K562 (cell line): ENCODE measurements at regions of chr1 and their contacts with region 1.

Region 1: DNA sequence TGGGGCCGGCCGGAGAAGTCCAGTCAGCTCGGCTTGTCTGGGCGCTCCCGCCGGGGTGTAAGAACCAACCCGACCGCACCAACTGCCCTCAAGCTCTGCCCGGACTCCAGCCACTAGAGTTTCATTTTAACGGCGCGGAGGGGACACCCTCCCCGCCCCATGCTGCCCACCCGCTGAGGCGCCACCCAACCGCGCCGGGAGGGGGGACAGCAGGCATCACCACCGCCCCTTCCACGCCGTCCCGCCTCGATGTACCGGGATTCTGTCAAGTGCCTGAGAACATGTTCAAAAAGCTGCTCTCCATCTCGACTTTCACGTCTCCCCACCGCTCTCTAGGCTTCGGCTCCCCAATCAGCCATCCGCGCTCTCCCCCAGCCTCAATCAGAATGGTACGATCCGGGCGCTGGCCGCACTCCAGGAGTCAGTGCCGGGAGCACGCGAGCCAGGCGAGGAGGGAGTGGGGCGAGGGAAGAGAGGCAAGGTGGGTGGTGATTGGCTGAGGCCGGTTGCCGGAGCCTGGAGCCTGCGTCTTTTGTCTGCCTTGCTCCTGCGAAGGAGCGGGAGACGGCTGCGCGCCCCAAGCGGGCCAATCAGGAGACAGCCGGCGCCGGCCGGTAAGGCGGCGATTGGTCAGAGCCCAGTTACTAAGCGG is at the start of gene PIK3R3:
- DNase-seq: peak; percentile 99 to 100 (median 100)
- ATAC-seq: peak; percentile 97
- H3K4me3 ChIP-seq: peak within 1 kb of the TSS; percentile 61
- H3K27ac ChIP-seq: peak within 1 kb of the TSS; percentile 95
- H3K4me1 ChIP-seq: peaks cover 13 to 21% of the 10 kb centered on the region in 2 experiments; a peak in 4 of 5 replicates
- H3K27me3 ChIP-seq: no peaks in the 10 kb centered on the region
- CTCF ChIP-seq: no peak; a peak in 1 of 6 replicates
- EP300 ChIP-seq: no peak; the same call in none of the 2 replicates
- POLR2A ChIP-seq: peak; percentile 94
- RAD21 ChIP-seq: no peak
- polyA plus RNA-seq, gene PIK3R3: 1.4 to 2.2 TPM

Region 2: GRCh38 chr1:45979074-45979777 is 153.4 kb before region 1 on chr1:
- CTCF ChIA-PET with region 1: no interaction called
- POLR2A ChIA-PET with region 1: no interaction called
- in situ Hi-C with region 1: no loop called
- intact Hi-C with region 1: no loop called
- DNase-seq: no peak
- ATAC-seq: no peak
- H3K4me3 ChIP-seq: no peak overlapping the region
- H3K27ac ChIP-seq: no peak overlapping the region
- H3K4me1 ChIP-seq: no peaks in the 10 kb centered on the region
- H3K27me3 ChIP-seq: no peaks in the 10 kb centered on the region
- CTCF ChIP-seq: no peak
- EP300 ChIP-seq: no peak
- POLR2A ChIP-seq: no peak
- RAD21 ChIP-seq: no peak

Region 3: GRCh38 chr1:46036894-46037839 is 95.5 kb before region 1 on chr1:
- CTCF ChIA-PET with region 1: no interaction called
- POLR2A ChIA-PET with region 1: interaction called, 7 read pairs
- in situ Hi-C with region 1: no loop called
- intact Hi-C with region 1: loop called (anchors 2 kb)
- DNase-seq: peak; percentile 87 to 92 (median 88)
- ATAC-seq: peak; percentile 95
- H3K4me3 ChIP-seq: no peak overlapping the region
- H3K27ac ChIP-seq: no peak overlapping the region; the same call in 2 of the 3 replicates
- H3K4me1 ChIP-seq: peaks cover 3 to 12% of the 10 kb centered on the region in 2 experiments; a peak in 4 of 5 replicates
- H3K27me3 ChIP-seq: no peaks in the 10 kb centered on the region
- CTCF ChIP-seq: peak; percentile 97 to 99 (median 99)
- EP300 ChIP-seq: no peak
- POLR2A ChIP-seq: peak; percentile 71
- RAD21 ChIP-seq: peak; percentile 100

Region 4: DNA sequence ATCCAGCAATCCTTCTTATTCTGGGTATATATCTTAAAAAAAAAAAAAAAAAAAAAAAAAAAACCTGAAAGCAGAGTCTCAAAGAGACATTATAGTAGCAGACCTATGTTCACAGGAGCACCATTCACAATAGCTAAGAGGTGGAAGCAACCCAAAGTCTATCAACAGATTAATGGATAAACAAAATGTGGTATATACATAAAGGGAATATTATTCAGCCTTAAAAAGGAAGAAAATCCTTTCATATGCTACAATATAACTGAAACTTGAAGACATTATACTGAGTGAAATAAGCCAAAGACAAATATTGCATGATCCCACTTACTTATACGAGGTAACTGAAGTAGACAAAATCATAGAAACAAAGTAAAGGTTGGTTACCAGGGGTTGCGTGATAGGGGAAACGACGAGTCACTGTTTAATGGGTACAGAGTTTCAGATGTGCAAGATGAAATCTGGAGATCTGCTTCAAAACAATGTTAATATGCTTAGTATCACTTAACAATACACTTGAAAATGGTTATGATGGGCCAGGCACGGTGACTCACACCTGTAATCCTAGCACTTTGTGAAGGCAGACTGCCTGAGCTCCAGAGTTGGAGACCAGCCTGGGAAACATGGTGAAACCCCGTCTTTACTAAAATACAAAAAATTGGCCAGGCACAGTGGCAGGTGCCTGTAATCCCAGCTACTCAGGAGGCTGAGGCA is 29.7 kb before region 1 on chr1:
- CTCF ChIA-PET with region 1: no interaction called
- POLR2A ChIA-PET with region 1: interaction called, 10 read pairs
- in situ Hi-C with region 1: no loop called
- intact Hi-C with region 1: no loop called
- DNase-seq: no peak
- ATAC-seq: no peak
- H3K4me3 ChIP-seq: no peak overlapping the region
- H3K27ac ChIP-seq: no peak overlapping the region
- H3K4me1 ChIP-seq: no peaks in the 10 kb centered on the region
- H3K27me3 ChIP-seq: no peaks in the 10 kb centered on the region
- CTCF ChIP-seq: no peak
- EP300 ChIP-seq: no peak
- POLR2A ChIP-seq: no peak
- RAD21 ChIP-seq: no peak

Region 5: GRCh38 chr1:46117810-46118494 is 14.7 kb before region 1 on chr1:
- CTCF ChIA-PET with region 1: no interaction called
- POLR2A ChIA-PET with region 1: interaction called, 53 read pairs
- in situ Hi-C with region 1: no loop called
- intact Hi-C with region 1: no loop called
- DNase-seq: no peak
- ATAC-seq: no peak
- H3K4me3 ChIP-seq: no peak overlapping the region
- H3K27ac ChIP-seq: no peak overlapping the region
- H3K4me1 ChIP-seq: peaks cover 7 to 11% of the 10 kb centered on the region in 2 experiments; a peak in 4 of 5 replicates
- H3K27me3 ChIP-seq: no peaks in the 10 kb centered on the region
- CTCF ChIP-seq: no peak
- EP300 ChIP-seq: no peak
- POLR2A ChIP-seq: no peak
- RAD21 ChIP-seq: no peak

Region 6: GRCh38 chr1:46152016-46152415 is 19.4 kb after region 1 on chr1:
- CTCF ChIA-PET with region 1: no interaction called
- POLR2A ChIA-PET with region 1: interaction called, 24 read pairs
- in situ Hi-C with region 1: no loop called
- intact Hi-C with region 1: no loop called
- DNase-seq: no peak
- ATAC-seq: no peak
- H3K4me3 ChIP-seq: no peak overlapping the region
- H3K27ac ChIP-seq: no peak overlapping the region
- H3K4me1 ChIP-seq: peaks cover 22 to 30% of the 10 kb centered on the region in 2 experiments
- H3K27me3 ChIP-seq: no peaks in the 10 kb centered on the region
- CTCF ChIP-seq: no peak
- EP300 ChIP-seq: no peak
- POLR2A ChIP-seq: no peak
- RAD21 ChIP-seq: no peak

Region 7: GRCh38 chr1:46158312-46159281 is 25.9 kb after region 1 on chr1:
- CTCF ChIA-PET with region 1: no interaction called
- POLR2A ChIA-PET with region 1: interaction called, 24 read pairs
- in situ Hi-C with region 1: no loop called
- intact Hi-C with region 1: loop called (anchors 1 kb)
- DNase-seq: peak; percentile 88 to 93 (median 90)
- ATAC-seq: peak; percentile 94
- H3K4me3 ChIP-seq: no peak overlapping the region
- H3K27ac ChIP-seq: peak overlapping the region; percentile 42; the same call in 1 of the 3 replicates
- H3K4me1 ChIP-seq: peaks cover 36 to 42% of the 10 kb centered on the region in 2 experiments
- H3K27me3 ChIP-seq: peaks cover 4 to 7% of the 10 kb centered on the region in 2 experiments
- CTCF ChIP-seq: no peak
- EP300 ChIP-seq: peak; percentile 98
- POLR2A ChIP-seq: no peak
- RAD21 ChIP-seq: peak in 1 of 2 experiments; percentile 36; a peak in 2 of 4 replicates

Region 8: DNA sequence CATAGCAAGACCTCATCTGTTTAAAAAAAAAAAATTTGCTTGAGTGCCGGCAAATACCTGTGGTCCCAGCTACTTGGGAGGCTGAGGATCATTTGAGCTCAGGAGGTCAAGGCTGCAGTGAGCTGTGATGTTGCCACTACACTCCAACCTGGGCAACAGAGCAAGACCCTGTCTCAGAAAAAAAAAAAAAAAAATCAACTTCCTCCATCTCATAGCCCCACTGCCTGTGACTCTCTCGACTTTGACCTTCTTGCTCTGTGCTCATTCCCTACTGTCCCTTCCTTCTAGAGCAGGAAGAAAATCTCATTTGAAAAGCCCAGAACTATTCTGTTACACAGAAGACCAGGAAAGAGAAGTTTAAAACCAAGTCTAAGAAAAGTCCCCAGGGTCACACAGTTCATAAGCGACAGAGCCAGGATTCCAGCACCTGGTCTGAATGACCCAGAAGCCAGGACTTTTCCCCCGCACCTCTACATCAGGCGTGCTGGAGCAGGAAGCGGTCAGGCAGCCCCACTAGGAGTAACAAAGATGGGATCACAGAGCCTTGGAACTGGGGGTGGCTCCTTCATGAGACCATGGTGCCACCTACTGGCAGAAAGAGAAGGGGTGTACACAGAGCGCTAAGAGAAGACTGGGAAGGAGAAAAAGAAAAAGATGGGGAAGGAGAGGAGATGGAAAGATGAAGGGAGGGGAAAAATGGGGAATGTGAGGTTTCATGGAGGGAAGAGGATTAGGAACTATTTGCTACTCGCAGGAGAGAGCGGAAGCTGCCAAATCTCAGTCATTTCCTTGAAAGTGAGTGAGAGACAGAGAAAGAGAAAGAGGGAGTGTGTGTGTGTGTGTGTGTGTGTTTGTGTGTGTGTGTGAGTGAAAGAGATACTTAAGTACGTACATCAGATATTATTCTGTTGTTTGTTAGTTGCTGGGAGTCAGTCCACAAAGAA is 46.8 kb after region 1 on chr1:
- CTCF ChIA-PET with region 1: no interaction called
- POLR2A ChIA-PET with region 1: interaction called, 4 read pairs
- in situ Hi-C with region 1: no loop called
- intact Hi-C with region 1: loop called (anchors 2 kb)
- DNase-seq: peak; percentile 91 to 92 (median 92)
- ATAC-seq: peak; percentile 95
- H3K4me3 ChIP-seq: no peak overlapping the region
- H3K27ac ChIP-seq: no peak overlapping the region
- H3K4me1 ChIP-seq: peaks cover 22 to 23% of the 10 kb centered on the region in 2 experiments
- H3K27me3 ChIP-seq: no peaks in the 10 kb centered on the region
- CTCF ChIP-seq: peak; percentile 95 to 98 (median 96)
- EP300 ChIP-seq: no peak
- POLR2A ChIP-seq: no peak
- RAD21 ChIP-seq: peak; percentile 100